Right ventricle myocardium inferior (tissue), 1 donor: ENCODE measurements at regions of chr1 and their contacts with region 1.

Region 1: DNA sequence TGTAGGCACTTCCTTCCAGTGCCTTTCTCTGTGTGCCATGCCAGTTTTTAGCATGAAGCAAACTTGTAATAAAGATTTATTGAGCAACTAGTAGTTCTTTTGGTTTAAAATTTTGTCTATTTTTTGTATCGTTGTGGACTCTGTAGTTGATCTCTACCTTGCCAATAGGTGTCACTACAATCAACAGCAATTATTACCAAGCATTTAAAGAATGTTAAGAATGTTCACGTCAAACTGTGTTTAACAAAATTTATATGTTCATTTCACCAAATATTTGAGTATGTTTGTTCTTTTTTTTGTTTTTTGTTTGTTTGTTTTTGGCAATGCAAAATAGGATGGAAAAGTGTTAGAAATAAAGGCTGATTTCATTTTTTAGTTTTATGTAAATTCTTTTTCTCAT is 208.1 kb downstream of the PATJ start:
- DNase-seq: no peak
- ATAC-seq: no peak

Region 2: DNA sequence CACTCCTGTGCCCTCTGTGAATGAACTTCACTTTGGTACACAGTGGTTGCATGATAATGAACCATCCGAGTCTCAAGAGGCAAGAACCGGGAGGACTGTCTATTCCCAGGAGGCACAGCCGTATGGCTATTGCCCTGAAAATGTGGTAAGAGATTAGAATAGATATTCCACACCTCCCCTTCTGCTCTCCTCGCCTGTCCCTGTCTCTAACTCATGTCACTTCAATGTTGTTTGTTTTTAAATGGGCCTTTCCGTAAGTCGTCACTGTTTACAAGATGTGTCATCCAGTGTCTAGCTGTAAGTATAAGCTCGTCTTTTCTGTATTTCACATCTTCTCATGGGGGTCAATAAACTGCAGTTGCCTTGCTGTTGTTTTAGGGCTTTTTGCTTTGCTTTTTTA is 85.9 kb before region 1 on chr1:
- intact Hi-C with region 1: no loop called
- DNase-seq: no peak
- ATAC-seq: no peak

Region 3: DNA sequence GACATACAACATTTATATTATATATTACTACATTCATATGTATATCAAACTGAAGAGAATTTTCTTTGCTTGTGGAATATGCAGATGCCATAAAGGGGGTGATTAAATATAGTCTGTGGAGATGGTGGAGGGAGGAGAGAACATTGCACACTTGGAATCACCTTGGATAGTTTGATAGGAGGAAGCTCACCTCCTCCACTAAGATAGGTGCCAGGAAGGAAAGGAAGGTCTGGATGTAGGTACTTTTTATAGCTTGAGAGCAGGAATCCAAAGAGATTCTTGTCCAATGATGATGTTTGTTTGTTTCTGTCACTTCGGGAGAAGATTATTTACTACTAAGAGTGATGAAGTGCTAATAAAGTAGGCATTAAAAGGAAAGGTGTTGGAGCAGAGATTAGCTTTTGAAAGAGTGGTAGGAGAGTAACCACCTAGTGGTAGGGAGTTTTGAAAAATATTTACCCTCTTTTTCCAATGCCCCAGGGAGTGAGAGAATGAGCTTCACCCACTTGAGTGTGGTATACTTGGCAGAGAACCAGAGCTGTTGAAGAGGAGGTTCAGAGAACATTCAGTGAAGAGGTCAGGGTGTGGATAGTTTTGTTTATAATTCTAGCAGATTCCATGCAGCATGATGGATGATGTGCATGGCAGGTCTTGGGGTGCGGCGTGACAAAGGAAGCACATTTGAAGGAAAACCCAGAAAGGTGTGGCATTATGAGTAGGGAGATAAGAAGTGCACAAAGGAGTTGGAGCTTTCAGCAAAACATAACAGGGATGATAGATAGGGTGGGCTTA is 63.1 kb before region 1 on chr1:
- intact Hi-C with region 1: loop called (anchors 5 kb)
- DNase-seq: no peak
- ATAC-seq: peak; percentile 71

Region 4: GRCh38 chr1:61904354-61904753 is 46.1 kb before region 1 on chr1:
- intact Hi-C with region 1: no loop called
- DNase-seq: no peak
- ATAC-seq: no peak